ENCODE measurements at regions of chr14 and their contacts with region 1.

Region 1: DNA sequence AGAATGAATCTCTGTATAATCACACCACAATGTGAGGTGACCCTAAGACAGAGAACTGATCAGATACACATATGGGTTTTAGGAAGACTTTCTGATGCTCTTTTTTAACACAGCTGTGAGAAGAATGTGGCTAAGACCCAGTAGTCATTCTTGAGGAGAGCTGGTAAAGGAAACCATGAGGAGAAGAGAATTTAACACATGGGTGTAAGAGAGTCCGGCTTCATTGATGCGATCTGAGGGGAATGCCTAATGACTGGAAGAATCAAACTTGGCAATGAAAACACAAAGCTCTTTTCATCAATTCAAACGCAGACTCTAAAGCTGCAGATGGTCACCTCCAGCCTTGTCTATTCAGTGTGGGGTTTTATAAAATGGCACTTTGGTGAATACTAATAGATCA is 79.3 kb downstream of the FOXA1 start:
- DNase-seq: no peak
- ATAC-seq: no peak
- H3K4me3 ChIP-seq: no peak overlapping the region
- H3K27ac ChIP-seq: no peak overlapping the region
- H3K4me1 ChIP-seq: no peaks in the 10 kb centered on the region
- H3K27me3 ChIP-seq: no peaks in the 10 kb centered on the region
- CTCF ChIP-seq: no peak
- POLR2A ChIP-seq: no peak
- RAD21 ChIP-seq: no peak

Region 2: DNA sequence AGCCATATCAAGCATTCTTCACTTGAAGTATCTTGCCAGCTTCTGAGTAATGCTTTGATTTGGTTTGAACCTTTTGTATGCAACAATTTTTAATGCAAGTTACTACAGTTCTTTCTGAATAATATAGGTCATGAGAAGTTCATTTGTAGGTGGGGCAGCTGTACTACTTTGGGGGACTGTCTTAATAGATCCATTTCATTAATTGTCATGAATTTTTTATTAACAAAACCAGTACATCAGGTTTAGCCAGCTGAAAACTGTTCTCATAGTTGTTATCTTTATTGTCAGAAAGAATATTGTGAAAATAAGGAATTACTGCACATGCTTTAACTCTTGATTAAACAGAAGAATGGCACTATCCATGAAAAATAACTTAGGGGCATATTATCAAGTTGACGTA is 63.4 kb before region 1 on chr14:
- CTCF ChIA-PET with region 1: no interaction called
- POLR2A ChIA-PET with region 1: no interaction called
- dilution Hi-C with region 1: no loop called
- in situ Hi-C with region 1: no loop called
- intact Hi-C with region 1: loop called (anchors 10 kb)
- DNase-seq: no peak
- ATAC-seq: no peak
- H3K4me3 ChIP-seq: no peak overlapping the region
- H3K27ac ChIP-seq: no peak overlapping the region
- H3K4me1 ChIP-seq: no peaks in the 10 kb centered on the region
- H3K27me3 ChIP-seq: no peaks in the 10 kb centered on the region
- CTCF ChIP-seq: no peak
- POLR2A ChIP-seq: no peak
- RAD21 ChIP-seq: no peak

Region 3: DNA sequence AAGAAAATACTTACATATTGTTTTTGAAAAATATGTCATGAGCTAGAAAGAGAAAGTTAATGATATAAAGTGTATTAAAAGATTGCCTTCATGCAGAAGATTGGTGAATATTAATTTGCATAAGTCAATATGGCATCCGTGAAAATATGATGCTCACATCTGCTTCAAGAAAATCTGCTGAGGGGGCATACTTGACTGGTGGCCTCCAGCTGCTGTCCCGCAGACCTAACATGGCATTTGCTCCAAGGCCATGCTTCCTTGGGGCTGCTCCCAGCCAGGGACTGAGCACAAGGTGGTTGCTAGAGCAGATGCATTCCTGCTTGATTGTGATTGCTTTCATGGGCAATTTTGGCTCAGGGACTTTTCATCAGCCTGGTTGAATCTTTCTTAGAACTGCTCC is 213.4 kb after region 1 on chr14:
- CTCF ChIA-PET with region 1: no interaction called
- POLR2A ChIA-PET with region 1: no interaction called
- dilution Hi-C with region 1: no loop called
- in situ Hi-C with region 1: no loop called
- intact Hi-C with region 1: no loop called
- DNase-seq: no peak
- ATAC-seq: no peak
- H3K4me3 ChIP-seq: no peak overlapping the region
- H3K27ac ChIP-seq: no peak overlapping the region
- H3K4me1 ChIP-seq: no peaks in the 10 kb centered on the region
- H3K27me3 ChIP-seq: no peaks in the 10 kb centered on the region
- CTCF ChIP-seq: no peak
- POLR2A ChIP-seq: no peak
- RAD21 ChIP-seq: no peak